Activated T-helper 2 cell treated with anti-CD3 and anti-CD28 coated beads, Interferon-gamma antibody, Interleukin-2, Interleukin-4, amounts not matched to agents 10 μg/mL and 5 μg/mL and 100 μg/mL, durations not matched to agents 14 hours and 24 hours and 36 hours (primary cell): ENCODE measurements at regions of chr4 and their contacts with region 1.

Region 1: DNA sequence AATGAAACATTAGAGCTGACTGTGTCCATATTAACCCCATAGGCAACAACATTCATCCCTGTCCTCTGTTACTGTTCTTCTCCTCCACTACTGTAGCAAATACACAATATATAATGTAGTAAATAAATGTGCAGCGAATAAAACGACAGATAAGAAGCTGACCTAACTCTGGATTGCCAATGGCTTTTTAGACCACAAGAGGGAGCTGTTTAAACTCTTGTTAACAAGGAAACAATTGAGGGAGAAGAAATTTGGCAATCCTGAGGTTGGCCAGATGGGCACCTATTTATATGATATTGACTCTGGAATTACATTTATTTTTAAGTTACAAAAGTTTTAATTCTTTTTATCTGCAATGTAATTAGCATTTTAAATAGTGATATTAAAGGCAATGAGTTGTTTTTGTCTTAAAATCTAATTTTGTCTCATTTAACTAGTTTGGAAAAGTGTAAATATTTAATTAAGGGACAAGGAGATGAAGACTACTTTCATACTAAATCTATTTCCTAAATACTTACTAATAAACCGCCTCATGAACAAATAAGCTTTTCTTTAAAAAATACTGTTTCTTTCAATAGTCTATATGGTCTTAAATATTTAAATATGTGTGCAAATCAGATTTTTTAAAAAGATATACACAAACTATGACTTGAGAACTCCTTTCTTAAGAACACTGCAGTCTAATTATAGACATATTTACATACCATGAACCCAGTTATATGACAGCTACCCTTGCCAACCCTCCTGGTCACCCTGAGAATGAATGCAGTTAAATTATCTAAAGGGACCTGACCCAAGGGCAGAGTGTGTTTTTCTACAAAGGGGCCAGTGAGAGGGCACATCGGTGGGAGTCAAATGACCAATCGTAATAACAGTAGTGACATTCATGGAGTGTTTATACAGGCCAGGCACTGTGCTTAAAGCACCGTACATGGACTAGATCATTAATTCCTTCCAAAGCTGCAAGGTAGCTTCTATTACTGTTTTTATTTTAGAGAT is 52.9 kb upstream of the HPF1 start:
- DNase-seq: no peak
- H3K4me3 Mint-ChIP-seq: no peak overlapping the region
- H3K27ac Mint-ChIP-seq: no peak overlapping the region
- H3K4me1 Mint-ChIP-seq: peaks cover 2% of the 10 kb centered on the region
- H3K27me3 Mint-ChIP-seq: peaks cover 2% of the 10 kb centered on the region

Region 2: GRCh38 chr4:170047771-170048354 is 237.2 kb after region 1 on chr4:
- intact Hi-C with region 1: loop called (anchors 1 kb)
- DNase-seq: no peak
- H3K4me3 Mint-ChIP-seq: no peak overlapping the region
- H3K27ac Mint-ChIP-seq: no peak overlapping the region
- H3K4me1 Mint-ChIP-seq: no peaks in the 10 kb centered on the region
- H3K27me3 Mint-ChIP-seq: no peaks in the 10 kb centered on the region

Region 3: GRCh38 chr4:170089668-170090351 is 279.2 kb after region 1 on chr4 and contains the start of gene AADAT:
- intact Hi-C with region 1: loop called (anchors 2 kb)
- DNase-seq: no peak
- H3K4me3 Mint-ChIP-seq: peak within 1 kb of the TSS; percentile 54
- H3K27ac Mint-ChIP-seq: no peak within 1 kb of the TSS
- H3K4me1 Mint-ChIP-seq: peaks cover 10% of the 10 kb centered on the region
- H3K27me3 Mint-ChIP-seq: peaks cover 43% of the 10 kb centered on the region
- total RNA-seq, gene AADAT: not detected in 2 replicates